Activated CD4-positive, alpha-beta T cell treated with anti-CD3 and anti-CD28 coated beads, Interleukin-2, amount 10 ng/mL, durations not matched to agents 24 days and 14 days (primary cell): ENCODE measurements at regions of chr15 and their contacts with region 1.

Region 1: DNA sequence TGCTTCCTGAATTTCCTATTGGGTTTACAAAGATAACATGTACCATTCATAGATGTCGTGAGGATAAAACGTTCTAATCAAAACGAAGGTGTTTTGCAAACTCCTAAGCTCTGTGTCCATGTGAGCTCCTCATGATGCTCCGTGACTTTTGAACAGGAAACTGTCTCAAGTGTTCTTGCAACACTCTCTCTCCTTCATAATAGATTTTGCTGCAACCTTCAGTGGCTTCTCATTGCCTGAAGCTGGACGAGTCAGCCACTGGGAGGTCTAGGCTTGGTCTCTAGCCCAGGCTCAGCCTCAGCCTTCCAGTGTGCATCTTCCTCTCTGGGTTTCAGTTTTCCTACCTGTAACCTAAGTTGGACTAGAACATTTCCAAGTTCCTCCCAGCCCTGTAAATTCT is 18.7 kb upstream of the BCL2A1 start:
- DNase-seq: no peak
- H3K4me3 Mint-ChIP-seq: no peak overlapping the region
- H3K27ac Mint-ChIP-seq: no peak overlapping the region
- H3K4me1 Mint-ChIP-seq: peaks cover 10% of the 10 kb centered on the region
- H3K27me3 Mint-ChIP-seq: peaks cover 3% of the 10 kb centered on the region

Region 2: GRCh38 chr15:79380755-79381497 is 608.8 kb before region 1 on chr15:
- intact Hi-C with region 1: loop called (anchors 1 kb)
- DNase-seq: peak; percentile 91
- H3K4me3 Mint-ChIP-seq: no peak overlapping the region
- H3K27ac Mint-ChIP-seq: no peak overlapping the region
- H3K4me1 Mint-ChIP-seq: no peaks in the 10 kb centered on the region
- H3K27me3 Mint-ChIP-seq: no peaks in the 10 kb centered on the region

Region 3: DNA sequence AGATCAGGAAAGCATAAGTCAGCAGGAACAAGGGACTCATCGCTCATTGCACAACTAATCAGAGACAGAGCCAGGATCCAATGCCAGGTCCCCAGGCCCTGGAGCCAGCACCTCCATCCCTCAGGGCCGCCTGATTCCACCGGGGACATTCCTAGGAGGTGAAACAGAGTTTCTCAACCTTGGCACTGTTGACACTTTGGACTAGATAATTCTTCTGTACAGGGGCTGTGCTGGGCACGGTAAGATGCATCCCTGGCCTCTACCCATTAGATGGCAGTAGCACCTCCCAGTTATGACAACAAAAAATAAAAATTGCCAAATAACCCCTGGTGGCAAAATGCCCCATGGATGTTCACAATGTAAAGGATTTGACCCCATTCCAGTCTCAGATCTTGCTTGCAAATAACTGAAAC is 220.6 kb before region 1 on chr15:
- intact Hi-C with region 1: loop called (anchors 5 kb)
- DNase-seq: no peak
- H3K4me3 Mint-ChIP-seq: no peak overlapping the region
- H3K27ac Mint-ChIP-seq: no peak overlapping the region
- H3K4me1 Mint-ChIP-seq: no peaks in the 10 kb centered on the region
- H3K27me3 Mint-ChIP-seq: peaks cover 24% of the 10 kb centered on the region

Region 4: GRCh38 chr15:79858469-79858868 is 131.2 kb before region 1 on chr15:
- intact Hi-C with region 1: loop called (anchors 5 kb)
- DNase-seq: no peak
- H3K4me3 Mint-ChIP-seq: no peak overlapping the region
- H3K27ac Mint-ChIP-seq: no peak overlapping the region
- H3K4me1 Mint-ChIP-seq: peaks cover 7% of the 10 kb centered on the region
- H3K27me3 Mint-ChIP-seq: no peaks in the 10 kb centered on the region

Region 5: GRCh38 chr15:79896637-79897379 is 92.9 kb before region 1 on chr15 and contains the start of gene MTHFS:
- intact Hi-C with region 1: loop called (anchors 1 kb)
- DNase-seq: peak; percentile 94
- H3K4me3 Mint-ChIP-seq: peak within 1 kb of the TSS; percentile 98
- H3K27ac Mint-ChIP-seq: peak within 1 kb of the TSS; percentile 100
- H3K4me1 Mint-ChIP-seq: peaks cover 36% of the 10 kb centered on the region
- H3K27me3 Mint-ChIP-seq: no peaks in the 10 kb centered on the region
- total RNA-seq, gene MTHFS: 34.5 and 35.3 TPM in 2 replicates

Region 6: GRCh38 chr15:79932447-79932846 is 57.2 kb before region 1 on chr15:
- intact Hi-C with region 1: no loop called
- DNase-seq: no peak
- H3K4me3 Mint-ChIP-seq: no peak overlapping the region
- H3K27ac Mint-ChIP-seq: no peak overlapping the region
- H3K4me1 Mint-ChIP-seq: peaks cover 7% of the 10 kb centered on the region
- H3K27me3 Mint-ChIP-seq: peaks cover 7% of the 10 kb centered on the region